Transverse colon (tissue), 4 donors: ENCODE measurements at regions of chr4 and their contacts with region 1.

Region 1: GRCh38 chr4:14920759-14921320 is 81.4 kb upstream of the CPEB2 start:
- DNase-seq: no peak
- H3K4me3 ChIP-seq: no peak overlapping the region
- H3K27ac ChIP-seq: no peak overlapping the region
- H3K4me1 ChIP-seq: peaks cover 0 to 4% (median 0%) of the 10 kb centered on the region in 4 donors
- H3K27me3 ChIP-seq: no peaks in the 10 kb centered on the region
- CTCF ChIP-seq: no peak
- EP300 ChIP-seq: no peak
- POLR2A ChIP-seq: no peak

Region 2: DNA sequence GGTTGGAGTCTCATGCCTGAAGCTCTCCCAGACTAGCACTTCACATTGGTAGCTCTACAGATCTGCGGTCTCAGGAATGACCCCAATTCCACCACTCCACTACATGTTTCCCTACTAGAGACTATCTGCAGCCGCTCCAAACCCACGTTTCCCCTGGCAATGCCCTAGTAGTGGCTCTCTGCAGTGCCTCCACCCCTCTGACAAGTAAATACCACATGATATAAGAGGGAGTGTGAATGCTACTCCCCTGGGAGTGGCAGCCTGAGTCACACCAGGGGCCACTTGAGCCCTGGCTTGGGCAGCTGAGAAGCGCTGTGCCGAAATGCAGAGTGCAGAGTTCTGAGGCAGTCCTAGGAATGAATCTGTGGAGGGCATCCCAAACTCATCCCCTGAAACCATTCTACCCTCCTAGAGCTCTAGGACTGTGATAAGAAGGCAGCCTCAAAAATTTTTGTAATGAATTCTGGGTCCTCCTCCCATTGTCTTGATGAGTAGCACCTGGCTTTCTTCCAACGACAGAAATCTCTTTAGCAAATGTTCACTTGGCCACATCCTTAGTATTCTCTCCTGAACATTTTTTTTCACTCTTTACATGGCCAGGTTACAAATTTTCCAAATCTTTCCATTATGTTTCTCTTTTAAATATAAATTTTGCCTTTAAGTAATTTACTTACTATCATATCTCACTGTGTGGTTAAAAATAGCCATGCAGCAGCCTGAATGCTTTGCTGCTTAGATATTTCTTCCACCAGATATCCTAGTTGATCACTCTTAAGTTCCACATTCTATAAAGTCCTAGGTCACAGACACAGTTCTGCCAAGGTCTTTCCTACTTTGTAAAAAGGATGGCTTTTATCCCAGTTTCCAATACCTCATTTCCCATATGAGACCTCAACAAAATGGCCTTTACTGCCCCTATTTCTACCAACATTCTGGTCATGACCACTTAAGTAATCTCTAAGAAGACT is 78.8 kb before region 1 on chr4:
- in situ Hi-C with region 1: no loop called
- intact Hi-C with region 1: loop called (anchors 10 kb)
- DNase-seq: peak; percentile 56
- H3K4me3 ChIP-seq: no peak overlapping the region
- H3K27ac ChIP-seq: peak overlapping the region in 3 of 4 donors; percentile 2 to 44 (median 6)
- H3K4me1 ChIP-seq: peaks cover 0 to 24% (median 6%) of the 10 kb centered on the region in 4 donors
- H3K27me3 ChIP-seq: no peaks in the 10 kb centered on the region
- CTCF ChIP-seq: no peak
- EP300 ChIP-seq: no peak
- POLR2A ChIP-seq: peak; percentile 45

Region 3: GRCh38 chr4:15197005-15197404 is 276.2 kb after region 1 on chr4:
- in situ Hi-C with region 1: no loop called
- intact Hi-C with region 1: no loop called
- DNase-seq: no peak
- H3K4me3 ChIP-seq: no peak overlapping the region
- H3K27ac ChIP-seq: no peak overlapping the region
- H3K4me1 ChIP-seq: no peaks in the 10 kb centered on the region
- H3K27me3 ChIP-seq: no peaks in the 10 kb centered on the region
- CTCF ChIP-seq: peak in 1 of 5 experiments; percentile 10
- EP300 ChIP-seq: no peak
- POLR2A ChIP-seq: no peak